AG04450 (cell line): ENCODE measurements at regions of chr1 and their contacts with region 1.

Region 1: GRCh38 chr1:55071477-55071876 is 32.1 kb downstream of the PCSK9 start:
- DNase-seq: peak; percentile 27
- H3K4me3 ChIP-seq: no peak overlapping the region
- H3K27ac ChIP-seq: no peak overlapping the region
- H3K27me3 ChIP-seq: no peaks in the 10 kb centered on the region
- CTCF ChIP-seq: peak; percentile 65

Region 2: DNA sequence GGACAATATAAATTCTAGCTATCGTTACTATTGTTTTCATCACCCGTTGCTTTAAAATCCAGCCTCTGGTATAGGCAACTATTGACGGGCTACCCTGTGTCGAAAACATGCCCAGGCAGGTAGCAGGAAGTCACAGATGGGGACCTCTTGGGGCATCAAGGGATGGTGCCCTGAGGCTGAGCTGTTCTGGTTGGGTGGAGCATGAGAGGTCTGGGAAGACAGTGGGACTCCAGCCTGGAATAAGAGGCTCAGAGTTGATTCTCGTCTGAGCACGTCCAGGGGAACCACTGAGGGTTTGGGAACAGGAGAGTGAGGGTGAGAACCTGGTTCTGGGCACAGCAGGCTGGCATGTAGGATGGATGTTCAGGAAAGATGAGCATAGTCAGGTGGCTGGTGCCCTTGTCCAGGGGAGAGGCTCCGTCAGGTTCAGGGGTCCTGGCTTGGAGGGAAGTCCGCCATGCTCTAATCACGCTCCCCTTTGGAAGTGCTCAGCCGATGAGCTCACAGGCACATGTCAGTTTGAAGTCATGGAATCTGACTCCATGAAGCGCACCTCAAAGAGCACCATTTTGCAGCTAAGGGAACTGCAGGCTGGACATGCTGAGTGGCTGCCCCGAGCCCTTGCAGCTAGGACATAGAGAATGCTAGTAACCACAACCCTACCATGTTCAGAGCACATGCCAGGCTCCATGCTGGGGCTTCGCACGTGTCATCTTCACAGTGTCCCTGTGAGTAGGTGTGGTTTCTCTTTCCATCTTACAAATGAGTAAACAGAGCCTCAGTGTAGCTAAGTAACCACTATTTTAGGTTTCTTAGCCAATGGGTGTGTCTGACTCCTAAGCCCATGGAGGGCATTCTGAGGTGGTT is 11.1 kb before region 1 on chr1:
- CTCF ChIA-PET with region 1: interaction called, 14 read pairs
- POLR2A ChIA-PET with region 1: interaction called, 6 read pairs
- DNase-seq: no peak
- H3K4me3 ChIP-seq: no peak overlapping the region
- H3K27ac ChIP-seq: no peak overlapping the region
- H3K27me3 ChIP-seq: peaks cover 3% of the 10 kb centered on the region
- CTCF ChIP-seq: no peak

Region 3: GRCh38 chr1:55127827-55128343 is 56.4 kb after region 1 on chr1:
- CTCF ChIA-PET with region 1: no interaction called
- POLR2A ChIA-PET with region 1: no interaction called
- DNase-seq: peak; percentile 10
- H3K4me3 ChIP-seq: no peak overlapping the region
- H3K27ac ChIP-seq: peak overlapping the region; percentile 21
- H3K27me3 ChIP-seq: no peaks in the 10 kb centered on the region
- CTCF ChIP-seq: no peak

Region 4: GRCh38 chr1:55679971-55680370 is 608.5 kb after region 1 on chr1:
- CTCF ChIA-PET with region 1: no interaction called
- POLR2A ChIA-PET with region 1: no interaction called
- DNase-seq: peak; percentile 54
- H3K4me3 ChIP-seq: no peak overlapping the region
- H3K27ac ChIP-seq: no peak overlapping the region
- H3K27me3 ChIP-seq: no peaks in the 10 kb centered on the region
- CTCF ChIP-seq: no peak